Ovary (tissue), 10 donors: ENCODE measurements at regions of chr3 and their contacts with region 1.

Region 1: DNA sequence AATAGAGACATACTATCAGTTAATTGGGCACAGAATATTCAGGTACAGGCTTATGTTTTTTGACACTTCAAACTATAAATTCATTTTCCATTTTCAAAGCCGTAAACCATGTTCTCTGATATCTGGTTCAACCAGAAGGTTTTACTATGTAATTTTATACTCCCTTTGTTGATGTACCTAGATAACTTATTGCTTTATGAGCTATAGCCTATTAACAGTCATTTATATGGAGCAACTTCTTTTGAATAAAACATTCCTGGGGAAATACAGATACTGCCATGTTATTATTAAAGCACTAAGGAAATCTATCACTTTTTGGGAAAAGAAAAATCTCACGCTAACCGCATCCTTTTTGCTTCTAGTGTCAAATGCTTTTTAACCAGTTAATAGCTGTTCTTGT is 505.6 kb downstream of the PYDC2 start:
- DNase-seq: no peak
- H3K4me3 ChIP-seq: no peak overlapping the region
- H3K27ac ChIP-seq: no peak overlapping the region
- H3K4me1 ChIP-seq: no peaks in the 10 kb centered on the region
- H3K27me3 ChIP-seq: no peaks in the 10 kb centered on the region
- CTCF ChIP-seq: no peak
- EP300 ChIP-seq: no peak
- POLR2A ChIP-seq: no peak

Region 2: GRCh38 chr3:191321019-191321767 is 645.4 kb before region 1 on chr3:
- intact Hi-C with region 1: loop called in 1 of 4 experiments (anchors 5 kb)
- DNase-seq: no peak
- H3K4me3 ChIP-seq: no peak overlapping the region
- H3K27ac ChIP-seq: no peak overlapping the region
- H3K4me1 ChIP-seq: no peaks in the 10 kb centered on the region
- H3K27me3 ChIP-seq: no peaks in the 10 kb centered on the region
- CTCF ChIP-seq: no peak
- EP300 ChIP-seq: no peak
- POLR2A ChIP-seq: no peak

Region 3: GRCh38 chr3:191624299-191624698 is 342.3 kb before region 1 on chr3:
- intact Hi-C with region 1: no loop called
- DNase-seq: no peak
- H3K4me3 ChIP-seq: no peak overlapping the region
- H3K27ac ChIP-seq: no peak overlapping the region
- H3K4me1 ChIP-seq: no peaks in the 10 kb centered on the region
- H3K27me3 ChIP-seq: no peaks in the 10 kb centered on the region
- CTCF ChIP-seq: no peak
- EP300 ChIP-seq: no peak
- POLR2A ChIP-seq: no peak